BJ (cell line): ENCODE measurements at regions of chr19 and their contacts with region 1.

Region 1: GRCh38 chr19:49113762-49114629 is at the start of gene LIN7B:
- DNase-seq: no peak
- H3K4me3 ChIP-seq: peak within 1 kb of the TSS; percentile 90
- H3K27me3 ChIP-seq: no peaks in the 10 kb centered on the region
- CTCF ChIP-seq: peak; percentile 19; the same call in 1 of the 2 replicates
- polyA plus RNA-seq, gene LIN7B: 6.7 and 9.4 TPM in 2 replicates

Region 2: DNA sequence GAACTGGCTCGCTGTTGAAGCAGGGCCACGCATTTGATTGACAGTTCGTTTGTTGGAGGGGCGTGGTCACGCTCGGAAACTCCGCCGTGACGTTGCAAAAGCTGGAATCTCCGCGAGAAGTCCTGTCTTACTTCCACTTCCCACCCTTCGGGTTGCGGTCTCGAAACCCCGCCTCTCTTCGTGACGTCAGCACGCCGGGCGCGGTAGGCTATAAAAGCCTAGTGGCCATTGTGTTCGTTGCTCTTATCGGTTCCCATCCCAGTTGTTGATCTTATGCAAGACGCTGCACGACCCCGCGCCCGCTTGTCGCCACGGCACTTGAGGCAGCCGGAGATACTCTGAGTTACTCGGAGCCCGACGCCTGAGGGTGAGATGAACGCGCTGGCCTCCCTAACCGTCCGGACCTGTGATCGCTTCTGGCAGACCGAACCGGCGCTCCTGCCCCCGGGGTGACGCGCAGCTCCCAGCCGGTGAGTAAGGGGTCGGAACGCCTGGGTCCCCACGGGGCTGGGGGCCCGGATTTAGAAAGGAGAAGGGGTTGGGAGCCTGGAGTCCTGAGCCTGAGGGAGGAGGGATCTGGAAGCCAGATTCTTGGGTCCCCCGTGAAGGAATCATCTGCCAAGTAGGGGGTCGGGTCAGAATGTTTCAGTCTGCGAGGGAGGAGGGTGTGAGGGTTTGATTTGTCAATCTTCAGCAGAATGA is 241.7 kb before region 1 on chr19 and contains the start of gene PPP1R15A:
- CTCF ChIA-PET with region 1: no interaction called
- POLR2A ChIA-PET with region 1: no interaction called
- DNase-seq: peak; percentile 92
- H3K4me3 ChIP-seq: peak within 1 kb of the TSS; percentile 88
- H3K27me3 ChIP-seq: no peaks in the 10 kb centered on the region
- CTCF ChIP-seq: no peak
- polyA plus RNA-seq, gene PPP1R15A: 24.7 and 43.0 TPM in 2 replicates

Region 3: GRCh38 chr19:49148784-49149651 is 35.0 kb after region 1 on chr19:
- CTCF ChIA-PET with region 1: interaction called, 11 read pairs
- POLR2A ChIA-PET with region 1: no interaction called
- DNase-seq: peak; percentile 45
- H3K4me3 ChIP-seq: peak overlapping the region; percentile 68
- H3K27me3 ChIP-seq: no peaks in the 10 kb centered on the region; the same call in 1 of the 2 replicates
- CTCF ChIP-seq: no peak

Region 4: GRCh38 chr19:49200238-49200862 is 86.4 kb after region 1 on chr19:
- CTCF ChIA-PET with region 1: interaction called, 16 read pairs
- POLR2A ChIA-PET with region 1: no interaction called
- DNase-seq: no peak
- H3K4me3 ChIP-seq: no peak overlapping the region
- H3K27me3 ChIP-seq: no peaks in the 10 kb centered on the region
- CTCF ChIP-seq: no peak

Region 5: DNA sequence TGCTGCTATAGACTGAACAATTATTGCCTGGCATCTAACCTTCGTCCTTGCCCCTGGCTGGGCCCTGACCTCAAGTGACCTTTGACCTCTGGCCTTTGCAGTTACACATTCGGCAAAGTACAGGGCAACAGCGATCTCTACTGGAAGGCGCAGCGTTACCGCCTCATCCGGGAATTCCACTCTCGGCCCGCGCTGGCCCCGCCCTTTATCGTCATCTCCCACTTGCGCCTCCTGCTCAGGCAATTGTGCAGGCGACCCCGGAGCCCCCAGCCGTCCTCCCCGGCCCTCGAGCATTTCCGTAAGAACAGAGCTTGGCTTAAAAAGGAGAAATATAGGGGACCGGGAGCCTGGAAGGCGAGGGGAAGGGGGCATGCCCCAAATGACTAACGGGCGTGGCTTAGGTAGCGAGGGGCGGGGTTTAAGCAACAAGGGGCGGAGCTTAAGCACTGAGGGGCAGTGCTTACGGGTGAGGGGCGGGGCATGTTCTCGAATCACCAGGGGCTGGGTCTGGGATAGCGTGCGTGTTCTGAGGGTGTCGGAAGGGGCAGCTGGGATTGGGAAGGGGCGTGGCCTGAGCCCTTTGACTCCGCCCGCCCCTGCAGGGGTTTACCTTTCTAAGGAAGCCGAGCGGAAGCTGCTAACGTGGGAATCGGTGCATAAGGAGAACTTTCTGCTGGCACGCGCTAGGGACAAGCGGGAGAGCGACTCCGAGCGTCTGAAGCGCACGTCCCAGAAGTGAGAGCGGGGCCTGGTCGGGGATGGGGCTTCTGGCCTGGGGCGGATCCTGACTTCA is 96.3 kb after region 1 on chr19:
- CTCF ChIA-PET with region 1: interaction called, 12 read pairs
- POLR2A ChIA-PET with region 1: no interaction called
- DNase-seq: no peak
- H3K4me3 ChIP-seq: no peak overlapping the region
- H3K27me3 ChIP-seq: no peaks in the 10 kb centered on the region
- CTCF ChIP-seq: no peak